CD8-positive, alpha-beta memory T cell (primary cell): ENCODE measurements at regions of chr2 and their contacts with region 1.

Region 1: DNA sequence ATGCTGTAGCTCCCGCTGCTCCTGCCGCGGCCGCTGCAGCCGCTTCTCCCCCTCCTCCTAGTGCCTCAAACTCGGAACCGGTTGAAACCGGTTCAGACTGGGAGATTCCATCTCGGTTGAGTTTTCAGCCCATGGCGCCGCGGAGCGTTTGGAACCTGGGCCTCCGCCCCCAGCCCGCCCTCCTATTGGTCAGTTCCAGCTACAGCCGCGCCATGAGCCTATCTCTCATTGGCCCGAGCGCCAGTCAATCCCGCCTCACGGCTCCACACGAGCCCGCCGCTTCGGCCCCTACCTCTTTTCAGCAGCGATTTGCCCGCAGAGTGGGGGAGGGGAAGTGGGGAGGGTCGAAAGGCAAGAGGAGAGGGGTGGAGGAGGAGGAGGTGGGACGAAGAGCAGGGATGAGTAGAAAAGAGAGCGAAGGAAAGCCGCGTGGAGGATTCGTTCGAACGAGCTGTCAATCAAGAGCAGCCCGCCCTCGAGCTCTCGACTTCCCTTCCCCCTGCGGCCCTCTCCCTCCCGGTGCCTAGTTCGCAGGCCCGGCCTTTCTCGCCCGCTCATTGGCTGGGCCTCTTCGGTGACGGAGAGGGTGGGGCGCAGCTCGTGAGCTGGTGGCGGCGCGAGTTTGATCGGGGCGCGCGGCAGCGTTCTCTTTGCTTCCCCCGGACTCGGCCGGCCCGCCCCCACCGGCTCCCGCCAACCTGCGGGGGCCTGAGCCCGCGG is at the start of gene XPO1:
- DNase-seq: peak; percentile 98 to 99 (median 99)
- H3K4me3 ChIP-seq: peak within 1 kb of the TSS; percentile 84
- H3K4me3 Mint-ChIP-seq: peak within 1 kb of the TSS; percentile 92 to 99 (median 94)
- H3K27ac ChIP-seq: peak within 1 kb of the TSS; percentile 99
- H3K27ac Mint-ChIP-seq: peak within 1 kb of the TSS; percentile 95 to 100 (median 100)
- H3K4me1 ChIP-seq: peaks cover 27% of the 10 kb centered on the region
- H3K4me1 Mint-ChIP-seq: peaks cover 39 to 43% (median 42%) of the 10 kb centered on the region in 3 donors
- H3K27me3 ChIP-seq: no peaks in the 10 kb centered on the region
- H3K27me3 Mint-ChIP-seq: peaks cover 0 to 10% of the 10 kb centered on the region in 2 donors
- total RNA-seq, gene XPO1: 207 to 217 TPM

Region 2: DNA sequence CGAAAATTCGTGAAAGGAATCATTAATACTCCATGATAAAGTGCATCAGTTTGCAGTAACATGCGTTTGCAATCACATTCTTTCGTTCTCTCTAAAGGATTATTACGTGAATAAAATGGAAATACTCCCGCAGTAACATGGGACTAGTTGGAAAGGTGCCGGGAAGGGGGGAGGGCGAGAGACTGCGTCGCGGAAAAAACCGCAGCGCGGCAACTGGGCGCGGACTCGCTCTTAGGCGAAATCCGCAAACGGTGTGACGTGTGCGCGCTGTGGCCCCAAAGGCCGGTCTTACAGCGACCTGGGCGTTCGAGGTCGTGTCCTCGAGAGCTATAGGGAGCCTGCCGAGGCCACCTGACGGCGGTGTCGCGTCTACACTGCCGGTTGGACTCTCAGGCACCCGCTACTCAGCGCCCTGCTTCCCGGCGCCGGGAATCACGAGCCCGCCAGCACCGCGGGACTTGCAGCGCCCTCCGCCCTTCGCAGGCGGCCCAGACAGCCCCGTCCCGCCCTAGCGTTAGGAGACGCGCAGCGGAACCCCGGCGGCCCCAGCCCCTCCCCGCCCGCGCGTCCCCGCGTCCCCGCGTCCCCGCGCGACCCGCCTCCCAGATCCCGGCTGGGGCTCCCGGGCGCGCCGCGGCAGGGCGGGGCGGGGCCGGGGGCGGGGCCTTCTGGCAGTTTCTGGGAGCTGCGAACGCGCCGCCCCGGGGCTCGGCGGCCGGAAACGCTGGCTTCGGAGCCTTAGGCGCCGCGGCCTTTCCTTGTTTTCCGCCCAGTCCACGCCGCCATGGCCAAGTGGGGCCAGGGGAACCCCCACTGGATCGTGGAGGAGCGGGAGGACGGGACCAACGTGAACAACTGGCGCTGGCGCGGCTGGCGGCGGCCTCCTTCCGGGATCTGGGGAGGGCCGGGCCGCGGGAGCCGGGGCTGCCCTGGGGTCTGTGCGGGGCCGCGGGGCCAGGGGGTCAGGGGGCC is 361.3 kb before region 1 on chr2:
- CTCF ChIA-PET with region 1: no interaction called
- POLR2A ChIA-PET with region 1: interaction called, 12 read pairs
- DNase-seq: peak; percentile 91 to 95 (median 93)
- H3K4me3 ChIP-seq: peak overlapping the region; percentile 93
- H3K4me3 Mint-ChIP-seq: peak overlapping the region; percentile 90 to 98 (median 94)
- H3K27ac ChIP-seq: peak overlapping the region; percentile 95
- H3K27ac Mint-ChIP-seq: peak overlapping the region; percentile 94 to 99 (median 96)
- H3K4me1 ChIP-seq: peaks cover 48% of the 10 kb centered on the region
- H3K4me1 Mint-ChIP-seq: peaks cover 52 to 57% (median 53%) of the 10 kb centered on the region in 3 donors
- H3K27me3 ChIP-seq: no peaks in the 10 kb centered on the region
- H3K27me3 Mint-ChIP-seq: no peaks in the 10 kb centered on the region

Region 3: GRCh38 chr2:61470965-61471904 is 67.1 kb before region 1 on chr2 and contains the start of gene USP34:
- CTCF ChIA-PET with region 1: interaction called, 3 read pairs
- POLR2A ChIA-PET with region 1: interaction called, 12 read pairs
- DNase-seq: peak; percentile 89 to 96 (median 92)
- H3K4me3 ChIP-seq: peak within 1 kb of the TSS; percentile 87
- H3K4me3 Mint-ChIP-seq: peak within 1 kb of the TSS; percentile 86 to 97 (median 95)
- H3K27ac ChIP-seq: peak within 1 kb of the TSS; percentile 99
- H3K27ac Mint-ChIP-seq: peak within 1 kb of the TSS; percentile 96 to 100 (median 99)
- H3K4me1 ChIP-seq: peaks cover 31% of the 10 kb centered on the region
- H3K4me1 Mint-ChIP-seq: peaks cover 25 to 45% (median 39%) of the 10 kb centered on the region in 3 donors
- H3K27me3 ChIP-seq: no peaks in the 10 kb centered on the region
- H3K27me3 Mint-ChIP-seq: peaks cover 0 to 1% of the 10 kb centered on the region in 2 donors
- total RNA-seq, gene USP34: 71.9 to 74.1 TPM